ENCODE measurements at regions of chr10 and their contacts with region 1.

Region 1: GRCh38 chr10:17787078-17787961 is 21.8 kb upstream of the MRC1 start:
- DNase-seq: peak in 1 of 2 experiments; percentile 17
- H3K4me3 ChIP-seq: no peak overlapping the region
- H3K27ac ChIP-seq: no peak overlapping the region
- H3K4me1 ChIP-seq: no peaks in the 10 kb centered on the region; a peak in 1 of 7 replicates
- H3K27me3 ChIP-seq: no peaks in the 10 kb centered on the region
- CTCF ChIP-seq: peak in 1 of 3 experiments; percentile 29; a peak in 1 of 4 replicates
- EP300 ChIP-seq: no peak
- POLR2A ChIP-seq: no peak
- RAD21 ChIP-seq: peak; percentile 21 to 34; a peak in 3 of 4 replicates

Region 2: DNA sequence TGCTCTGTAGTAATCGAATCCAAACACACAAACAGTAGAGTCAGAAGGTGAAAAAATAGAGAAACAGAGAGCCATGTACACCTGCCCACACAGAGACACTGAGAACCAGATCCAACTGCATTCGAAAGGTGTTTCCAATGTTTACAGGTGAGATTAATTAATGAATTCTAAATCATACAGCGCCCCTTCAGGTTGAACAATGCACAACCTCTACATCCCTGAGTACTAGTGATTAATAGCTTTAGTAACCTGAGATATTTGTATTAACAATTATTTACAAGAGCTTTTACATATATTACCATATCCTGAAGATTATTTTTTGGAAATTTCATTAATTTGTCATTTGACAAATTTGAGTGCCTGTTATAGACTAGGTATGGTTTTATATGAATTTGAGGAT is 14.2 kb after region 1 on chr10:
- CTCF ChIA-PET with region 1: interaction called, 29 read pairs
- POLR2A ChIA-PET with region 1: no interaction called
- DNase-seq: no peak
- H3K4me3 ChIP-seq: no peak overlapping the region
- H3K27ac ChIP-seq: no peak overlapping the region
- H3K4me1 ChIP-seq: no peaks in the 10 kb centered on the region
- H3K27me3 ChIP-seq: no peaks in the 10 kb centered on the region
- CTCF ChIP-seq: peak in 1 of 3 experiments; percentile 37; a peak in 2 of 4 replicates
- EP300 ChIP-seq: no peak
- POLR2A ChIP-seq: no peak
- RAD21 ChIP-seq: peak in 1 of 2 experiments; percentile 18; a peak in 1 of 4 replicates

Region 3: DNA sequence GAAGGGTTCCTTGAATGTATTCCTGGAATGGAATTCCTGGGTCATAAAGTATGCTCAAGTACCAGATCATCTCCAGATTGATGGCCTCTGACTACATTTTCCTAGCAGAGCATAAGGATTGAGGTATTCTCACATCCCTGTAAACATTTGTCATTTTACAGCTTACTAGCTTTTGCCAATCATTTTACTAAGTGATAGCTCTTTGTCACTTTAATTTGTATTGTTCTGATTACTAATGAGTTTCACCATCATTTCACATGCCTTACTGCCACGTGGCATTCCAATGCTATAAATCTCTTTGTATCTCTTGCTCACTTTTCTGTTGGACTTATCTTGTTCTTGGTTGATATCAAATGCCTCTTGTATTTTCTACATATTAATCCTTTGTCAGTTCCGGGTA is 284.3 kb after region 1 on chr10:
- CTCF ChIA-PET with region 1: no interaction called
- POLR2A ChIA-PET with region 1: no interaction called
- DNase-seq: no peak
- H3K4me3 ChIP-seq: no peak overlapping the region
- H3K27ac ChIP-seq: no peak overlapping the region
- H3K4me1 ChIP-seq: no peaks in the 10 kb centered on the region
- H3K27me3 ChIP-seq: no peaks in the 10 kb centered on the region
- CTCF ChIP-seq: no peak
- EP300 ChIP-seq: no peak
- POLR2A ChIP-seq: no peak
- RAD21 ChIP-seq: no peak

Measured in H1 (cell line).